ENCODE measurements at regions of chr4 and their contacts with region 1.

Region 1: DNA sequence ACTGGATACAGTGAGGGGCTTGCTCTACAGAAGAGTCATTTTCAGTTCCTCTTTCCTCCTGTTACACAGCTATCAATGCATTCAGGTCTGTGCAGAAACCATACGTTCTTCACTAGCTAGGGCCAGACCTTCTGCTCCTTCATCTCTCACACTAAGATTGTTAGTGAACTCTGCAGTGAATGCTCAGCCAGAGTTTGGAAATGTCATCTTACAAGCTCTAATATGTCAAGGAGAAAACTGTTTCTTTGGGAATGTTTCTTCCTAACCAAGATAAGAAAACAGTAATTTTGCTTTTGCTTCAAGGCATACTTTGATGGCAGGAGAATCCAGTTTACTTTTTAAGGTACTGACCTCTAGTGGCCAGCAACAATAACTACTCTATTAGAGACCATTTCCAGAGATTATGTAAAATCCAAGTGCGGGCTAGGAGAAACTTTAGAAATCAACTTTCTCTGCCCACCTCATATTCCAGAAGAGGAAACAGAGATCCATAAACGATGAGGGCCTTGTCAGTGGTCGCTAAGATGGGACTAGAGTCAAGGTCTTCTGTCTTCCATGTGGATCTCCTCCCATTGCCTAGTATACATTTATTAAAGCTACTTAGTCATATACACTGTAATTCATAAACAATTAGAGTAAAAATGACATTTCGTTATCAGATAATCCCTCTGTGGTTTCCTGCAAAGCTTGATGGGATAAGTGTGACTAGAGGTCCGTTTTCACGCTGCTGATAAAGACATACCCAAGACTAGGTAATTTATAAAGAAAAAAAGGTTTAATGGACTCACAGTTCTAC is 12.1 kb upstream of the CC2D2A start:
- DNase-seq: no peak
- ATAC-seq: peak; percentile 65
- H3K4me3 Mint-ChIP-seq: no peak overlapping the region
- H3K27ac Mint-ChIP-seq: no peak overlapping the region
- H3K4me1 Mint-ChIP-seq: peaks cover 2% of the 10 kb centered on the region
- H3K27me3 Mint-ChIP-seq: no peaks in the 10 kb centered on the region
- CTCF ChIP-seq: peak; percentile 79

Region 2: GRCh38 chr4:15182600-15183220 is 274.9 kb before region 1 on chr4:
- CTCF ChIA-PET with region 1: no interaction called
- POLR2A ChIA-PET with region 1: no interaction called
- intact Hi-C with region 1: no loop called
- DNase-seq: peak; percentile 58
- ATAC-seq: peak; percentile 91
- H3K4me3 Mint-ChIP-seq: no peak overlapping the region
- H3K27ac Mint-ChIP-seq: peak overlapping the region; percentile 74
- H3K4me1 Mint-ChIP-seq: peaks cover 17% of the 10 kb centered on the region
- H3K27me3 Mint-ChIP-seq: peaks cover 2% of the 10 kb centered on the region
- CTCF ChIP-seq: no peak

Region 3: GRCh38 chr4:15226203-15226602 is 231.4 kb before region 1 on chr4:
- CTCF ChIA-PET with region 1: interaction called, 124 read pairs
- POLR2A ChIA-PET with region 1: no interaction called
- intact Hi-C with region 1: loop called (anchors 2 kb)
- DNase-seq: no peak
- ATAC-seq: no peak
- H3K4me3 Mint-ChIP-seq: no peak overlapping the region
- H3K27ac Mint-ChIP-seq: no peak overlapping the region
- H3K4me1 Mint-ChIP-seq: no peaks in the 10 kb centered on the region
- H3K27me3 Mint-ChIP-seq: no peaks in the 10 kb centered on the region
- CTCF ChIP-seq: no peak

Region 4: DNA sequence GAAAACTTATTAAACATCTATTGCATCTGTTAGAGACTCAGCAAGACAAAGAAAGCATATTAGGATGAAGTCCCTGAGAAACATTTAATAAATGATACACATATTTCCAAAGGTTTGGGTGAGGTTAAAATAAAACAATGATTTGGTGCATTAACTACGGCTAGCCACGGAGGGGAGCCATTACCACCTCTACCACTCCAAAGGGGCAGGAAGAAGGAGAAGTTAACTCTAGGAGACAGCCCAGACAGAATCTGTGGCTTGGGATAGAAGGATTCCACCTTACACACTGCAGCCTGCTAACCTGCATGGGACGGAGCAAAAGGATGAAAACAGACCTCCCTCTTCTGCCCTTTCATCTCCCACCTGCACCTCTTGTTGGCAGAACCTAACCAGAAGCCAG is 218.9 kb before region 1 on chr4:
- CTCF ChIA-PET with region 1: interaction called, 124 read pairs
- POLR2A ChIA-PET with region 1: no interaction called
- intact Hi-C with region 1: no loop called
- DNase-seq: peak; percentile 43
- ATAC-seq: peak; percentile 73
- H3K4me3 Mint-ChIP-seq: no peak overlapping the region
- H3K27ac Mint-ChIP-seq: no peak overlapping the region
- H3K4me1 Mint-ChIP-seq: peaks cover 14% of the 10 kb centered on the region
- H3K27me3 Mint-ChIP-seq: no peaks in the 10 kb centered on the region
- CTCF ChIP-seq: peak; percentile 83

Region 5: GRCh38 chr4:15396157-15396800 is 61.3 kb before region 1 on chr4:
- CTCF ChIA-PET with region 1: interaction called, 27 read pairs
- POLR2A ChIA-PET with region 1: no interaction called
- intact Hi-C with region 1: loop called (anchors 2 kb)
- DNase-seq: peak; percentile 78
- ATAC-seq: peak; percentile 83
- H3K4me3 Mint-ChIP-seq: no peak overlapping the region
- H3K27ac Mint-ChIP-seq: no peak overlapping the region
- H3K4me1 Mint-ChIP-seq: peaks cover 21% of the 10 kb centered on the region
- H3K27me3 Mint-ChIP-seq: no peaks in the 10 kb centered on the region
- CTCF ChIP-seq: peak; percentile 87

Region 6: GRCh38 chr4:15444872-15445547 is 12.6 kb before region 1 on chr4:
- CTCF ChIA-PET with region 1: interaction called, 16 read pairs
- POLR2A ChIA-PET with region 1: no interaction called
- intact Hi-C with region 1: no loop called
- DNase-seq: no peak
- ATAC-seq: no peak
- H3K4me3 Mint-ChIP-seq: no peak overlapping the region
- H3K27ac Mint-ChIP-seq: no peak overlapping the region
- H3K4me1 Mint-ChIP-seq: peaks cover 8% of the 10 kb centered on the region
- H3K27me3 Mint-ChIP-seq: no peaks in the 10 kb centered on the region
- CTCF ChIP-seq: no peak

Region 7: GRCh38 chr4:15906024-15906443 is 448.4 kb after region 1 on chr4:
- CTCF ChIA-PET with region 1: no interaction called
- POLR2A ChIA-PET with region 1: no interaction called
- intact Hi-C with region 1: no loop called
- DNase-seq: peak; percentile 62
- ATAC-seq: peak; percentile 78
- H3K4me3 Mint-ChIP-seq: no peak overlapping the region
- H3K27ac Mint-ChIP-seq: no peak overlapping the region
- H3K4me1 Mint-ChIP-seq: peaks cover 7% of the 10 kb centered on the region
- H3K27me3 Mint-ChIP-seq: peaks cover 21% of the 10 kb centered on the region
- CTCF ChIP-seq: no peak